Spleen (tissue), 13 donors: ENCODE measurements at regions of chr7 and their contacts with region 1.

Region 1: DNA sequence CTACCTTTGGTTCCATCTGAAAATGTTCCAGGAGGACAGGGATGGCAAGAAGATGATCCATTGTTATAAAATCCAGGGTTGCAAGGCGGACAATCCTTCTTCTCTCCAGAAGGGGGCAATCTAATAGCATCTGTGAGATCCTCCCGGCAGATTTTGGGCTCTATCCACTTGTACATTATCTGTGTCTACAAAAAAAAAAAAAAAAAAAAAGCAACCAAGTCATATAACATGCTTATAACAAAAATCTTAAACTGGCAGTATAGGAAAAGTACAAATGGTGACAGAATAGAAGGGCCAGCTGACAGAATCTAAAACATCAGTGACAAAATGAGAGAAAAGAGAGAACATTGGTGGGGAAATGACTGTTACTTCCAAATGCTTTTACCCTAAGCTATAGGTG is 132.7 kb downstream of the ELAPOR2 start:
- DNase-seq: no peak
- H3K4me3 ChIP-seq: no peak overlapping the region
- H3K27ac ChIP-seq: no peak overlapping the region
- H3K4me1 ChIP-seq: no peaks in the 10 kb centered on the region
- H3K27me3 ChIP-seq: no peaks in the 10 kb centered on the region
- CTCF ChIP-seq: peak; percentile 36 to 76 (median 67)
- POLR2A ChIP-seq: no peak

Region 2: GRCh38 chr7:86391813-86392212 is 534.9 kb before region 1 on chr7:
- intact Hi-C with region 1: no loop called
- DNase-seq: no peak
- H3K4me3 ChIP-seq: no peak overlapping the region
- H3K27ac ChIP-seq: no peak overlapping the region
- H3K4me1 ChIP-seq: no peaks in the 10 kb centered on the region
- H3K27me3 ChIP-seq: no peaks in the 10 kb centered on the region
- CTCF ChIP-seq: no peak
- POLR2A ChIP-seq: no peak

Region 3: DNA sequence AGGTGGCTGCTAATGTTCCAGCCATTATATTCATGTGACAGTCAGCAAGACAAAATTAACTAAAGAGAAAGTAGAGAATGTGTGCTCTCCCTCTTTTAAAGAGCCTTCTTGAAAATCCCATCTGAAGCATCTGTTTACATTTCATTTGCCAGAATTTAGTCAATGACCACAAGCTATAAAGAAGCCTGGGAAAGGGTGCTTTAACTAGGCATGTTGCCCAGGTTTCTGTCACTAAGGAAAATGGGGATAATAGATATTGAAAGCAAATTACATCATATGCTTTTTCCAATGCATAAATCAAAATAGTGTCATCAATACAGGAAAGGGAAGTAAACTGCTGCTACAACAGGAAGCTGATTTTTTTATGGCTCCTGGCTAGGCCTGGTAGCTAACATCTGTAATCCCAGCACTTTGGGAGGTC is 65.0 kb after region 1 on chr7:
- intact Hi-C with region 1: no loop called
- DNase-seq: no peak
- H3K4me3 ChIP-seq: no peak overlapping the region
- H3K27ac ChIP-seq: peak overlapping the region in 2 of 8 donors; percentile 13 to 15
- H3K4me1 ChIP-seq: peaks cover 0 to 9% (median 0%) of the 10 kb centered on the region in 6 donors
- H3K27me3 ChIP-seq: no peaks in the 10 kb centered on the region
- CTCF ChIP-seq: no peak
- POLR2A ChIP-seq: no peak

Region 4: GRCh38 chr7:87234949-87235348 is 308.2 kb after region 1 on chr7:
- intact Hi-C with region 1: loop called (anchors 5 kb)
- DNase-seq: no peak
- H3K4me3 ChIP-seq: no peak overlapping the region
- H3K27ac ChIP-seq: no peak overlapping the region
- H3K4me1 ChIP-seq: peaks cover 0 to 6% (median 0%) of the 10 kb centered on the region in 6 donors
- H3K27me3 ChIP-seq: peaks cover 0 to 5% (median 0%) of the 10 kb centered on the region in 7 donors
- CTCF ChIP-seq: no peak
- POLR2A ChIP-seq: no peak

Region 5: GRCh38 chr7:87263537-87263936 is 336.8 kb after region 1 on chr7:
- intact Hi-C with region 1: no loop called
- DNase-seq: no peak
- H3K4me3 ChIP-seq: no peak overlapping the region
- H3K27ac ChIP-seq: no peak overlapping the region
- H3K4me1 ChIP-seq: no peaks in the 10 kb centered on the region
- H3K27me3 ChIP-seq: peaks cover 0 to 17% (median 0%) of the 10 kb centered on the region in 7 donors
- CTCF ChIP-seq: no peak
- POLR2A ChIP-seq: no peak

Region 6: DNA sequence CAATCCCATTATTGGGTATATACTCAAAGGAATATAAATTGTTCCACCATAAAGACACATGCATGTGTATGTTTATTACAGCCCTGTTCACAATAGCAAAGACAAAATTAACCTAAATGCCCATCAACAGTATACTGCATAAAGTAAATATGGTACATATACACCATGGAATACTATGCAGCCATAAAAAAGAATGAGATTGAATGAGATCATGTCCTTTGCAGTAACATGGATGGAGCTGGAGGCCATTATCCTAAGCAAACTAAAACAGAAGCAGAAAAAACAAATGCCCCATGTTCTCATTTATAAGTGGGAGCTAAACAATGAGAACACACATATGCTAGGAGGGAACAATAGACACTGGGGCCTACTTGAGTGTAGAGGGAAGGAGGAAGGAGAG is 374.0 kb after region 1 on chr7:
- intact Hi-C with region 1: no loop called
- DNase-seq: no peak
- H3K4me3 ChIP-seq: no peak overlapping the region
- H3K27ac ChIP-seq: no peak overlapping the region
- H3K4me1 ChIP-seq: no peaks in the 10 kb centered on the region
- H3K27me3 ChIP-seq: peaks cover 0 to 10% (median 0%) of the 10 kb centered on the region in 7 donors
- CTCF ChIP-seq: no peak
- POLR2A ChIP-seq: no peak